Lower leg skin (tissue), 4 donors: ENCODE measurements at regions of chr15 and their contacts with region 1.

Region 1: DNA sequence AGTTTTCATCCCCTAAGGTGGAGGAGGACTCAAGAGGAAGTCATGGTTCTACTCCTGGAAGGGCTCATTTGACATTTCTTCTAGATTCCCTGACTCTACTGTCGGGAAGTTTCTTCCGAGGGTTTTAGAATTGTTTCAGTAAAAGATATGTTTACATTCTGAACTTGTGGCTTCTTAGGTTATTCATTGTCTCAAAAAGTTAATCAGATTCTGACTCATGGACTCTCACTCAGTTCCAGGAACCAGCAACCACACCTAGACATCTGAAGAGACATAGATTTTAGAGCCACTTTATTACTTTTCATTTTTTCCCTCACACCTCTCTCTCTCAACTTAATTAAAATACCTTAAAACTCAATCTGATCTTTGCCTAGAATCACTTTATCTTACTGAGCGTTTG is 862.6 kb downstream of the AGBL1 start:
- DNase-seq: no peak
- H3K4me3 ChIP-seq: no peak overlapping the region
- CTCF ChIP-seq: no peak
- POLR2A ChIP-seq: no peak

Region 2: GRCh38 chr15:87193481-87193880 is 251.2 kb after region 1 on chr15:
- intact Hi-C with region 1: loop called (anchors 10 kb)
- DNase-seq: no peak
- H3K4me3 ChIP-seq: no peak overlapping the region
- CTCF ChIP-seq: no peak
- POLR2A ChIP-seq: no peak